ENCODE measurements at regions of chr21 and their contacts with region 1.

Region 1: DNA sequence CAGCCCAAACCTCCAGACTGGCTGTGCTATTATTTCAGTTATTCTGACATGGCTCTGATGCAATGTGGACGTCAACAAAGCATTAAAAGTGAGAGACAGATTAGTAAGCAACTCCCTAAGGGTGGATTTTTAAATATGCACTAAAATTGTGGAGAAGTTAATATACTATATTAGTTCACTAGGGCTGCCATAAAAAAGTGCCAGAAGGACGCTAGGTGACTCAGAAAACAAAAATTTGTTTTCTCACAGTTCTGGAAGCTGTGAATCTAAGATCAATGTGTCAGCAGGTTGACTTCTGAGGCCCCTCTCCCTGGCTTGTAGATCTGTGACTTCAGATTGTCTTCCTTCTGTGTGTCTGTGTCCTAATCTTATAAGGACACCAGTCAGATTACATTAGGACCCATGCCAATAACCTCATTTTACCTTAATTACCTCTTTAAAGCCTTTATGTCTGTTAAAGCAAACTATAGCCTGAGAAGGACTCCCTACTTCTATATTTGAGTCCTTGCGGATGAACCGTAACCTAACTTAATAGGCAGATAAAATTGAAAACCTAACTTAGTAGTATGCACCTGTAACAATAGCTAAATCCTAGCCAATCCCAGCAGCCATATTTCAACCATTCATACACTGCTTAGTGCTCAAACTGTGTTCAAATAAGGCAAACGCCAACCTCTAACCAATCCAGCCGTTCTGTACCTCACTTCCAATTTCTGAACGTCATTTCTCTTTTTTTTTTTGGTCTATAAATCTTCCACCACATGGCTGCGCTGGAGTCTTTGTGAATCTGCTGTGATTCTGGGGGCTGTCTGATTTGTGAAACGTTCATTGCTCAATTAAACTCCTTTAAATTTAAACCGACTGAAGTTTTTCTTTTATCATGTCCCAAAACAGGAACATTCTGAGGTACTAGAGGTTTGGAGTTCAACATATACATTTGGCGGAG is 65.8 kb upstream of the BACH1 start:
- DNase-seq: peak in 2 of 3 donors; percentile 59 to 60
- H3K4me3 ChIP-seq: peak overlapping the region in 1 of 3 experiments; percentile 44
- H3K4me3 Mint-ChIP-seq: peak overlapping the region; percentile 28 to 84
- H3K27ac ChIP-seq: peak overlapping the region in 1 of 2 donors; percentile 78
- H3K27ac Mint-ChIP-seq: peak overlapping the region; percentile 73 to 96 (median 85)
- H3K4me1 ChIP-seq: peaks cover 89 to 96% of the 10 kb centered on the region in 2 donors
- H3K4me1 Mint-ChIP-seq: peaks cover 92% of the 10 kb centered on the region
- H3K27me3 ChIP-seq: no peaks in the 10 kb centered on the region
- H3K27me3 Mint-ChIP-seq: no peaks in the 10 kb centered on the region
- CTCF ChIP-seq: peak; percentile 32

Region 2: GRCh38 chr21:29181799-29182470 is 50.9 kb before region 1 on chr21:
- intact Hi-C with region 1: loop called in 1 of 2 experiments (anchors 5 kb)
- DNase-seq: peak; percentile 57 to 75 (median 70)
- H3K4me3 ChIP-seq: peak overlapping the region in 1 of 3 experiments; percentile 3
- H3K4me3 Mint-ChIP-seq: peak overlapping the region; percentile 49 to 64
- H3K27ac ChIP-seq: peak overlapping the region; percentile 57 to 89
- H3K27ac Mint-ChIP-seq: peak overlapping the region; percentile 92 to 97 (median 96)
- H3K4me1 ChIP-seq: peaks cover 55 to 62% of the 10 kb centered on the region in 2 donors
- H3K4me1 Mint-ChIP-seq: peaks cover 60% of the 10 kb centered on the region
- H3K27me3 ChIP-seq: no peaks in the 10 kb centered on the region
- H3K27me3 Mint-ChIP-seq: peaks cover 0 to 2% (median 1%) of the 10 kb centered on the region in 3 donors
- CTCF ChIP-seq: no peak

Region 3: GRCh38 chr21:29195981-29196669 is 36.7 kb before region 1 on chr21:
- intact Hi-C with region 1: loop called in 1 of 2 experiments (anchors 5 kb)
- DNase-seq: peak; percentile 98 to 100 (median 99)
- H3K4me3 ChIP-seq: peak overlapping the region; percentile 19 to 62 (median 55)
- H3K4me3 Mint-ChIP-seq: peak overlapping the region; percentile 61 to 86
- H3K27ac ChIP-seq: peak overlapping the region; percentile 96 to 100
- H3K27ac Mint-ChIP-seq: peak overlapping the region; percentile 99 to 100 (median 99)
- H3K4me1 ChIP-seq: peaks cover 56 to 61% of the 10 kb centered on the region in 2 donors
- H3K4me1 Mint-ChIP-seq: peaks cover 59% of the 10 kb centered on the region
- H3K27me3 ChIP-seq: no peaks in the 10 kb centered on the region
- H3K27me3 Mint-ChIP-seq: no peaks in the 10 kb centered on the region
- CTCF ChIP-seq: peak; percentile 82

Region 4: DNA sequence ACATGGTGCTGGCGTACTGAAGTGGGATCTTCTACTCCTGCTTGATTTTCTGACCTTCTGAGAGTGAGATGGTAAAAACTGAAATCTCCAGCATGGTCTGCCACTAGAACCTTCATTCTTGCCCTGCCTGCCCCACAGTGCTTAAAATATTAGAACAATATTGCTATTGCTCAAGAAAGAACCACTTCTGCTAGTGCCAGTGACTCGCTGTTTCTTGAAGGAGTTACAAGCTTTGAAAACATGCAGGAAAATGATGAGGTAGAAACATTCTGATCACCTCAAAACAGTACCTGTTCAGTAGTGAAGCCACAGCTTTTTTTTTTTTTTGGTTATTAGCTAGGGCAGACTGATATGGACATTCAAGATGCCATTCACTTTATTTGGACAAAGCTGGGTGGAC is 161.2 kb after region 1 on chr21:
- intact Hi-C with region 1: no loop called
- DNase-seq: no peak
- H3K4me3 ChIP-seq: no peak overlapping the region
- H3K4me3 Mint-ChIP-seq: no peak overlapping the region
- H3K27ac ChIP-seq: no peak overlapping the region
- H3K27ac Mint-ChIP-seq: peak overlapping the region in 1 of 7 donors; percentile 14
- H3K4me1 ChIP-seq: peaks cover 4 to 9% of the 10 kb centered on the region in 2 donors
- H3K4me1 Mint-ChIP-seq: peaks cover 15% of the 10 kb centered on the region
- H3K27me3 ChIP-seq: no peaks in the 10 kb centered on the region
- H3K27me3 Mint-ChIP-seq: peaks cover 0 to 3% (median 0%) of the 10 kb centered on the region in 3 donors
- CTCF ChIP-seq: no peak